ENCODE measurements at regions of chr15 and their contacts with region 1.

Region 1: GRCh38 chr15:57527382-57528091 is 64.2 kb upstream of the MYZAP start:
- DNase-seq: no peak
- ATAC-seq: peak; percentile 92
- H3K4me3 Mint-ChIP-seq: no peak overlapping the region
- H3K27ac Mint-ChIP-seq: no peak overlapping the region
- H3K4me1 Mint-ChIP-seq: peaks cover 11% of the 10 kb centered on the region
- H3K27me3 Mint-ChIP-seq: no peaks in the 10 kb centered on the region
- CTCF ChIP-seq: no peak; the same call in 1 of the 2 replicates

Region 2: GRCh38 chr15:57146506-57147201 is 380.9 kb before region 1 on chr15:
- CTCF ChIA-PET with region 1: interaction called, 11 read pairs
- POLR2A ChIA-PET with region 1: no interaction called
- DNase-seq: no peak
- ATAC-seq: no peak
- H3K4me3 Mint-ChIP-seq: peak overlapping the region; percentile 45
- H3K27ac Mint-ChIP-seq: peak overlapping the region; percentile 88
- H3K4me1 Mint-ChIP-seq: peaks cover 19% of the 10 kb centered on the region
- H3K27me3 Mint-ChIP-seq: no peaks in the 10 kb centered on the region
- CTCF ChIP-seq: peak; percentile 45

Region 3: GRCh38 chr15:57235873-57236272 is 291.7 kb before region 1 on chr15:
- CTCF ChIA-PET with region 1: no interaction called
- POLR2A ChIA-PET with region 1: no interaction called
- DNase-seq: no peak
- ATAC-seq: no peak
- H3K4me3 Mint-ChIP-seq: no peak overlapping the region
- H3K27ac Mint-ChIP-seq: peak overlapping the region; percentile 6; the same call in 1 of the 2 replicates
- H3K4me1 Mint-ChIP-seq: peaks cover 33% of the 10 kb centered on the region
- H3K27me3 Mint-ChIP-seq: no peaks in the 10 kb centered on the region
- CTCF ChIP-seq: no peak

Region 4: DNA sequence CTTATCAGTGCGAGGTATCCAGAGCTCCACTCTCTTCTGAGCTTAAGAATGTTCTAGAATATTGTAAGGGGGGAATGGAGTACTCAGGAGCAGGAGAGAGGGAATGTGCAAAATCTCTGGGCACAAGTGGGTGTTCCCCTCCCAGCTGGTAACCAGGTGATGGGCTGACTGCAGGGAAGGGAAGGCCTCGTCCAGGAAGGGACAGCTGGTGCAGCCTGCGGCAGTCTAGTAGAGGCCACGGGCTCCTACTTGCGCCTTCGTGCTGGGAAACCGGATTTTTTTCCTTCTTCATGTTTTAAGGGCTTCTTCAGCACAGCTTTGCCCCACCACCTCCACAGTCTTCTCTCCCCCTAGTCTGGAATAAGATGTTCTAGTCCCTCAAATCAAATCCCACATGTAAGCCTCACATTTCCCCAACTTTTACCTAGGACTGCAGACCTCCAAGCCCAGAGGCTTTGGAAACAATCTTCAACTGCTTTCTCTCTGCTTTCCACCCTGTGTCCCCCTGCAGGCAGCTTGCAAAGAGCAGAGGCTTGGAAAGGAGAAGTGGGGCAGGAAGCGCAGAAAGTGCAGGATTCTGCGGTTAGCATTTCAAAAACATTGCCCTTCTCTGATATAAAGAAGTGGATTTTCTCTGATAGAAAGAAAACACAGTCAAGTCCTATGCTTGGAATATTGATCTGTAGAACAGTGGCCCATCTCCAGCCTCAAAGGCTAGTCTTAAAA is 163.1 kb before region 1 on chr15:
- CTCF ChIA-PET with region 1: interaction called, 26 read pairs
- POLR2A ChIA-PET with region 1: no interaction called
- DNase-seq: peak; percentile 56
- ATAC-seq: peak; percentile 86
- H3K4me3 Mint-ChIP-seq: no peak overlapping the region
- H3K27ac Mint-ChIP-seq: peak overlapping the region; percentile 81
- H3K4me1 Mint-ChIP-seq: peaks cover 26% of the 10 kb centered on the region
- H3K27me3 Mint-ChIP-seq: no peaks in the 10 kb centered on the region; the same call in 1 of the 2 replicates
- CTCF ChIP-seq: no peak

Region 5: GRCh38 chr15:57485869-57486268 is 41.7 kb before region 1 on chr15:
- CTCF ChIA-PET with region 1: interaction called, 11 read pairs
- POLR2A ChIA-PET with region 1: no interaction called
- DNase-seq: peak; percentile 44
- ATAC-seq: peak; percentile 96
- H3K4me3 Mint-ChIP-seq: no peak overlapping the region
- H3K27ac Mint-ChIP-seq: peak overlapping the region; percentile 57; the same call in 1 of the 2 replicates
- H3K4me1 Mint-ChIP-seq: peaks cover 21% of the 10 kb centered on the region
- H3K27me3 Mint-ChIP-seq: no peaks in the 10 kb centered on the region
- CTCF ChIP-seq: no peak

Region 6: DNA sequence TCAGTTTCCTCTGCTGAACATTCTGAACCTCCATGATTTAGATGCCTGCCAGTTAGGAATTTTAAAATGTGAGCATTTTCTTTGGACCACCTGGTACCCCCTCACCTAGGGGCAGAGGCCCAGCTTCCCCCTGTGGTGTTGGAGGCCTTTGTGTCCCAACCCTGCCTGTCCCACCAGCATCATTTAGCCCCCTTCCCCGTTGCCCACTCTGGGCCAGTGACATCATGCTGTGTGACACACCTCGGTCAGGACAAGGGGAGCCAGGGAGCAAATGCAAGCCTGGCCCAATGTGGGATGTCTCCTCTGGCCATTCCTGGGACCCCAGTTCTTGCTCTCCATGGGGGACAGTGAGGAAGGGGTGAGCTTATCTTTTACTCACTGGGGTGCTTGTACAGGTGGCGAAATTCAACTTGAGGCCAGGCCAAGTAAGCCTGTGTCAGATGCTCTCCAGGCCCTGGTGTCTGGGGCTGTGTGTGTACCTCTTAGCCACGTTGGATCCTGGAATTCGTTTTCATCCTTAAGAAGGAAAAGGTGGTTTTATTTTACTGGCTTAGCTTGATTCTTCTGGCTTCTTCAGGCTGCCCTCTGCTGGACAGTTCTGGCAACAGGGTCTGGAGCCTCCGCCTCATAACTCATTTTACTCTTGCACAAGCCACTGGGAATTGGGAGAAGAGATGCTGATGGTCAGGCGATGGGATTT is 14.4 kb after region 1 on chr15:
- CTCF ChIA-PET with region 1: interaction called, 46 read pairs
- POLR2A ChIA-PET with region 1: no interaction called
- DNase-seq: peak; percentile 77
- ATAC-seq: peak; percentile 67
- H3K4me3 Mint-ChIP-seq: no peak overlapping the region
- H3K27ac Mint-ChIP-seq: peak overlapping the region; percentile 89
- H3K4me1 Mint-ChIP-seq: no peaks in the 10 kb centered on the region
- H3K27me3 Mint-ChIP-seq: no peaks in the 10 kb centered on the region
- CTCF ChIP-seq: peak; percentile 60

Measured in WTC11 (cell line).